ENCODE measurements at regions of chr1 and their contacts with region 1.

Region 1: GRCh38 chr1:179121159-179121938 is 39.5 kb downstream of the TOR3A start:
- ATAC-seq: peak in 3 of 8 experiments; percentile 22 to 36 (median 25)
- H3K4me3 ChIP-seq: no peak overlapping the region
- H3K27ac ChIP-seq: no peak overlapping the region
- H3K4me1 ChIP-seq: no peaks in the 10 kb centered on the region

Region 2: GRCh38 chr1:179310721-179311120 is 189.4 kb after region 1 on chr1:
- in situ Hi-C with region 1: loop called in 1 of 9 experiments (anchors 25 kb)
- ATAC-seq: peak in 3 of 8 experiments; percentile 54 to 71 (median 69)
- H3K4me3 ChIP-seq: no peak overlapping the region
- H3K27ac ChIP-seq: no peak overlapping the region
- H3K4me1 ChIP-seq: no peaks in the 10 kb centered on the region